ENCODE measurements at regions of chr17 and their contacts with region 1.

Region 1: GRCh38 chr17:76726231-76726775 is at the start of gene JMJD6:
- DNase-seq: peak; percentile 98
- total RNA-seq, gene JMJD6: 60.7 TPM

Region 2: DNA sequence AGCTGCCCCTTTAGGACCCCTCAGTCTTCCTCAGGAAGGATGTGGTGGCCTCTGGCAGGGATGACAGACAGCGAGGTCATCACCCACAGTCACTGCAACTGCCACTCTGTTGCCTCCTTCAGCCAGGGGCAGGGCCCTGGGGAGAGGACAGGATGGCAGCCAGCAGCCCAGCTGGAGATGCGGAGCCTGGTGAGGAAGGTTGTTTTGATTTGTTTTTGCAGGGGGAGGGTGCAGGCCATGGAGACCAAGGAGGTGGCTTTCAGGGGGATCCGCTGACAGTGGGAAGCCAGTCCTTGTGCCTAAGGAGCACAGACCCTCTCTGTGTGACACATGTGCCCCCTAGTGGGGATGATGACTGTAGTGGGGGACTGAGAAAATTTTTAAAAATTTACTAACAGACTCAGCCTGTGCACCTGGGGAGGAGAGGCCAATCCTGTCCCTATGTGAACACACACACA is 179.1 kb before region 1 on chr17:
- intact Hi-C with region 1: no loop called
- DNase-seq: peak; percentile 76

Region 3: DNA sequence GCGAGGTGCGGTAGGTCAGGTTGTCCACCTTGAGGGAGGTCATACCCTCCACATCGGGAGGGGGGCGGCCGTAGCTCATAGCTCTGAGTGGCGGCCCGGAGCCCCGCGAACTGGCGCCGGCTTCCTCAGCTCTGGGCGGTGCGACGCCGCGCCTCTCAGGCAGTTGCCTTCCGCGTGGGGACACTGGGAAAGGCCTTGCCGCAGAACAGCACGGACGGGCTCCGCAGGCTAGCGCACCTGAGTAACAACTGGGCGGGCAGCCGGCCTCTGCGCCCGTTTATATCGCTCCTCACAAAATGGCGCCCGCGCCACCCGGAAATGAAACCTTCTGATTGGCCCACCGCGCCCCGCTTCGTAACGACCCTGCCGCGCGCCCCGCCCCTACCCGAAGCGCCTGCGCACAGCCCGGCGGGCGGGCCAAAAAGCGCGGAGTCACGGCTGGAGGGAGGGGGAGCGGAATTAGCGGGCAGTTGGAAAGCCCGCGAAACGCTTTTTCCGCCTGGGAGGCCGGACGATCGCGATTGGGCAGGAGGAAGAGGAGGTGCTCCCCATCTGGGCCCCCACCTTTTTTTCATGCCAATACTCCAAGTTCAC is 10.9 kb after region 1 on chr17 and contains the start of gene SRSF2:
- intact Hi-C with region 1: loop called (anchors 1 kb)
- DNase-seq: peak; percentile 99
- total RNA-seq, gene SRSF2: 98.0 TPM